ENCODE measurements at regions of chr1 and their contacts with region 1.

Region 1: GRCh38 chr1:9110669-9111356 is 18.1 kb downstream of the GPR157 start:
- ATAC-seq: peak; percentile 88 to 98 (median 92)
- H3K4me3 ChIP-seq: no peak overlapping the region
- H3K27ac ChIP-seq: no peak overlapping the region
- H3K4me1 ChIP-seq: peaks cover 0 to 2% of the 10 kb centered on the region in 2 donors

Region 2: DNA sequence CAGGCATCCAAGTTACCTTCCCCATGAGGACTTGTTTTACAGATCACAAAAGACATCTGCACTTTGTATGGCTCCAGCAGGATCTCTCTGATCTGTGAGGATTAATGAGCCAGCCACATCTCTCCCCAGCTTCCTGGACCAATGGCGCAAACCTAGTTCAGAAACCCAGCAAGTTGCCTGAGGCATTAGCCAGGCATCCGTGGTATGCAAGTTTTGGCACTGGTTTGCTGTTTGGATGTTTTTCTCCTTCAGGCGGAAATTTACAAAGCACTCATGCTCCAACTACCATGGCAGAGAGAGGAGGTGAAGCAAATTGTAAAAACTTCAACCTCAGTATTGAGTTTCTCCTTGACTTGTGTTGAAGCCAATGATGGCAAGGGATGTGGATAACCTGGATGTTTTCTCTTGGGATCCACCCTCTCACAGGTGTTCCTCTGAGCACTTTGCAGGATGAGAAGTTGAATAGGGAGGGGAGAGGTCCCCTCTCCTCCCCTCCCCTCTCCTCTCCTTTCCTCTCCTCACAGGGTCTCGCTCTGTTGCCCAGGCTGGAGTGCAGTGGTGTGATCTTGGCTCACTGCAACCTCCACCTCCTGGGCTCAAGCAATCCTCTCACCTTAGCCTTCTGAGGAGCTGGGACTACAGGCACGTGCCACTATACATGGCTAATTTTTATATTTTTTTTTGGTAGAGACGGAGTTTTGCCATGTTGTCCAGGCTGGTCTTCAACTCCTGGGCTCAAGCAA is 206.7 kb before region 1 on chr1:
- in situ Hi-C with region 1: loop called in 1 of 9 experiments (anchors 25 kb)
- ATAC-seq: peak in 4 of 8 experiments; percentile 62 to 96 (median 74)
- H3K4me3 ChIP-seq: no peak overlapping the region
- H3K27ac ChIP-seq: no peak overlapping the region
- H3K4me1 ChIP-seq: peaks cover 7 to 9% of the 10 kb centered on the region in 2 donors

Region 3: DNA sequence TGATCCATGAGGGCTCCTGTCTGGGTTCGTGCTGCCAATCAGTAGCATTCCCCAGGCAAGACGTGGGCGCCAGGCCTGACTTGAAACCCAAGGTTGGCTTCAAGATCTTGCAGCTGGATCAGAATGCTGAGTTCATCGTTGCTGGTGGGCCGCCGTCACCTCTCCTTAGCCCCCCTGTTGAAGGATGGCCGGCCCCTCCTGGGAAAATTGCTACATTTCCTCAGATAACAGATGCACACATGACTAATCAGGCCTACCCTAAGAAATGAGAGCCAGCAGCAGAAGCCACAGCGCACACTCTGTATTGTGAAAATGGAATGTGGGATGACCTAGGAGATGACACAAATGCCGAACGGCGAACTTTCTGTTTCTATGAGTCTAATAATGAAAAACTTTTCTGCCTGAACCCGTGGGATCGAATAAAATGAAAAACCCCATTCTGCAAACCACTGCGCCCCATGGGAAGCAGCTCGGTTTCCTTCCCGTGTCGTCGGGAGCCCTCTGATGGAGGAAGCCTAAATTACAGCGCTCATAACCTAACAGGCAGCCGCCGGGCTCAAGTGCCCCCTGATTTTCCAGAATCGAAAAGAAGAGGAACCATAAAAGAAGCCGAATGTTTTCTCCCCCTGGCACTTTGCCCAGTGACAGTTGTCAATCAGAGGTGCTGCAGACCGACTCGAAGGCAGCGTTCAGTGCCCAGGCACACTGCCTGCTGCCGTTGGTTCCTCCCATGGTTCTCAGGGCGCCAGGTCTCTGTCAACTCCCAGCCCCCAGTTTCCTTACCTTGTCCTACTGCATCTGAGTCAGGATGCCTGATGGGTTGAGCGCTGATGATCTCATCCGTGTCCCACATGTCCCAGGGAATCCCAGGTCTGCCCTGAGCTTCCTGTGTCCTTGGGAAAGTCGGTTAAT is 85.6 kb after region 1 on chr1:
- in situ Hi-C with region 1: loop called in 2 of 9 experiments (anchors 10 kb)
- ATAC-seq: peak; percentile 42 to 73 (median 60)
- H3K4me3 ChIP-seq: no peak overlapping the region
- H3K27ac ChIP-seq: no peak overlapping the region
- H3K4me1 ChIP-seq: peaks cover 21 to 36% of the 10 kb centered on the region in 2 donors

Measured in motor neuron (in vitro differentiated cells).